WTC11 (cell line): ENCODE measurements at regions of chr13 and their contacts with region 1.

Region 1: DNA sequence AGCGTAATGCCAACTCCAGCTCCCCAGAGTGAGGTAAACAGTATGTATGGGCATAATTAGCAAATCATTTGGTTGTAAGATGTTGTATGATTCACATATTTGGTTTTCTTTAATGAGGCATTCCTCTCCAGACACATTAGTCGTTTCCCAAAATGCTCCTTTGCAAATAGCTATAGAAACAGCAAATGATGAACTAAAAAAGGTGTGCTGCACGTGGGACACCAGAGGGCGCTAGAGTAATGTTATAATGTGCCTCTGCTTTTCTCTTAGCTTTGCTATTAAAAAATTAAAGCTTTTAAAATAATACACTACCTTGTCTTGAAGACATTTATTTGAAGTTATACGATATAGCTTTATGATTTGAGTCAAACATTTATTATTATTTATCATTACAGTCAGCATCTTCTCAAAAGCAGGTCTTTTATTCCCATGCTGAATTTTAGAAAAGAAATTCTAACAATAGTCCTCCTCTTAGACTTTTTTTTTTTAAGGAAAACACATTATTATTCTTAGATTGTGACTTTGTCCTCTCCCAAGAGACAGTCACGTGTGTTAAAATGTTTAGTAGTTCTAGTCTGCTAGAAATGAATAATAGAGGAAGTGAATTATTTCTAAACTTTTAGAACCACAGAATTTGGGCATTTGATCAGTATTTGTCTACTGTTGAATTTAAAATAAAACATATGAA is 121.6 kb upstream of the FRY start:
- DNase-seq: no peak
- ATAC-seq: peak; percentile 47
- H3K4me3 Mint-ChIP-seq: no peak overlapping the region
- H3K27ac Mint-ChIP-seq: no peak overlapping the region
- H3K4me1 Mint-ChIP-seq: peaks cover 17% of the 10 kb centered on the region
- H3K27me3 Mint-ChIP-seq: no peaks in the 10 kb centered on the region
- CTCF ChIP-seq: peak; percentile 74

Region 2: DNA sequence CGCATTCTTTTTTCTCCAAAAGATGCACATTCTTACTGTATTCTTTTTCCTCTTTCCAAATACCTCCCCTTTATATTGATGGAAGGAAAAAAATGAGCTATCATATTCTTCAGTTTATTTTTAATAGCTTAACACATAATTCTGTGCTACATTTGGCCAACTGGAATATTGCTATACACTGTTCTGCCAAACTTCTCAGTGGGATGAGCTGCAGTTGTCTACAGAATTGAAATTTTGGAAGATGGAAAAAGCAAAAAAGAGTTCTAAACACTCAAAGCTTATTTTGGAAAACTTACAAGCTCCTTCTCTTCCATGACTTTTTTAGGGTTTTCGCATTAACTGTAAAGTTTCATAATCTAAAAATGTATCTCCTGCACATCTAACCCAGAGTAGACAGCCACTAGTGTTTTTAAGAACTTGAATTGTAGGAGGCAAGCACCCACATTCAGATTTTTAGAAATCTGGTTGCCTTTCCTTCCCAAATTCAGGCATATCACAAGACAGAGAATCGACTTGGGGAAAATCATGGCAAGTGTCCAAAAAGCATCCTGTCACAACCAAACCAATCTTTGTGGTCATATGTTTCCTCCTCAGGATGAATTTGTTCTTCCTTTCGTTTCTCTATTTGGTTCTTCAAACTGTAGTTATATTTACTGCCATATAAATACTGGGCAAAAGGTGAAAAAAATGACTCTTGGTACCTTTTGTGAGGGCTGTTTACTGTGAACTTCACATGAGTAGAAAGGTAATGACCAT is 10.1 kb after region 1 on chr13:
- CTCF ChIA-PET with region 1: interaction called, 27 read pairs
- POLR2A ChIA-PET with region 1: no interaction called
- DNase-seq: no peak
- ATAC-seq: no peak
- H3K4me3 Mint-ChIP-seq: no peak overlapping the region
- H3K27ac Mint-ChIP-seq: no peak overlapping the region
- H3K4me1 Mint-ChIP-seq: peaks cover 13% of the 10 kb centered on the region
- H3K27me3 Mint-ChIP-seq: no peaks in the 10 kb centered on the region
- CTCF ChIP-seq: no peak

Region 3: DNA sequence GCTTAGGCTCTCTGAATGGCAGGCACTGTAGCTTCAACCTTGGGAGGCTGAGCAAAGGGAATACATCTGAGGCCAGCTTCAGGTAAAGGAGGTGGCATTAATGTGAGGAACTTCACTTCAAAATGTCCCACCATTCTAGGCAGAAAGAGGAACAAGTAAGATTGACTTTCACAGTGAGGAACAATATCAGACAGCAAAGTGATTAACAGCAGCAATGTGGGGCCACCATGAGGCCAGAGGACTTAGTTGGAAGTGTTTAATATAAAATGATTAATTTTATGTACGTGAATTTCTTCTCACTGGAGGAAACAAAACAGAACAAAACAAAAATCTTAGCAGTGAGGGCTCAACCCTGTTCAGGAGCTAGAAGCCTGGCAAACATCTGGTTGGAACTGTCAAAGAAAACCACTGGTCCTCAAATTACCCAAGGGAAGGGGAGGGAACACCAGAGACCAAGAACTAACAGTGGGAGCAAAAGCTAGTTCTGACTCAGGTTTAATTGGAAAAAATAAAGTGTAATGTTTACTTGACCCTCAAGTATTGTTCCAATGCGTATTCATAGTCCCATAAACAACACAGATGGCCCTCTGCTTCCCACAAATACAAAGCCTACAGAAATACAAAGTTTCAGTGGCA is 77.6 kb after region 1 on chr13:
- CTCF ChIA-PET with region 1: interaction called, 10 read pairs
- POLR2A ChIA-PET with region 1: no interaction called
- DNase-seq: no peak
- ATAC-seq: no peak
- H3K4me3 Mint-ChIP-seq: no peak overlapping the region
- H3K27ac Mint-ChIP-seq: no peak overlapping the region
- H3K4me1 Mint-ChIP-seq: peaks cover 6% of the 10 kb centered on the region
- H3K27me3 Mint-ChIP-seq: no peaks in the 10 kb centered on the region
- CTCF ChIP-seq: no peak

Region 4: GRCh38 chr13:32011971-32012370 is 102.0 kb after region 1 on chr13:
- CTCF ChIA-PET with region 1: interaction called, 11 read pairs
- POLR2A ChIA-PET with region 1: interaction called, 3 read pairs
- DNase-seq: no peak
- ATAC-seq: no peak
- H3K4me3 Mint-ChIP-seq: no peak overlapping the region
- H3K27ac Mint-ChIP-seq: no peak overlapping the region
- H3K4me1 Mint-ChIP-seq: peaks cover 7% of the 10 kb centered on the region
- H3K27me3 Mint-ChIP-seq: no peaks in the 10 kb centered on the region
- CTCF ChIP-seq: no peak

Region 5: GRCh38 chr13:32164622-32165268 is 254.7 kb after region 1 on chr13:
- CTCF ChIA-PET with region 1: interaction called, 38 read pairs
- POLR2A ChIA-PET with region 1: no interaction called
- DNase-seq: peak; percentile 46
- ATAC-seq: peak; percentile 99
- H3K4me3 Mint-ChIP-seq: no peak overlapping the region
- H3K27ac Mint-ChIP-seq: no peak overlapping the region
- H3K4me1 Mint-ChIP-seq: no peaks in the 10 kb centered on the region
- H3K27me3 Mint-ChIP-seq: no peaks in the 10 kb centered on the region
- CTCF ChIP-seq: peak; percentile 79

Region 6: GRCh38 chr13:32267836-32268439 is 357.9 kb after region 1 on chr13:
- CTCF ChIA-PET with region 1: interaction called, 14 read pairs
- POLR2A ChIA-PET with region 1: no interaction called
- DNase-seq: peak; percentile 85
- ATAC-seq: peak; percentile 100
- H3K4me3 Mint-ChIP-seq: no peak overlapping the region
- H3K27ac Mint-ChIP-seq: 0 out of 2 replicates have a peak overlapping the region, but pooled peaks have one; percentile 39
- H3K4me1 Mint-ChIP-seq: no peaks in the 10 kb centered on the region
- H3K27me3 Mint-ChIP-seq: no peaks in the 10 kb centered on the region
- CTCF ChIP-seq: peak; percentile 98